Naive thymus-derived CD8-positive, alpha-beta T cell (primary cell): ENCODE measurements at regions of chr4 and their contacts with region 1.

Region 1: GRCh38 chr4:58809342-58809741 is 1699.2 kb upstream of the IGFBP7 start:
- DNase-seq: no peak
- ATAC-seq: no peak
- H3K4me3 Mint-ChIP-seq: no peak overlapping the region
- H3K27ac Mint-ChIP-seq: no peak overlapping the region
- H3K4me1 Mint-ChIP-seq: no peaks in the 10 kb centered on the region
- H3K27me3 Mint-ChIP-seq: no peaks in the 10 kb centered on the region

Region 2: DNA sequence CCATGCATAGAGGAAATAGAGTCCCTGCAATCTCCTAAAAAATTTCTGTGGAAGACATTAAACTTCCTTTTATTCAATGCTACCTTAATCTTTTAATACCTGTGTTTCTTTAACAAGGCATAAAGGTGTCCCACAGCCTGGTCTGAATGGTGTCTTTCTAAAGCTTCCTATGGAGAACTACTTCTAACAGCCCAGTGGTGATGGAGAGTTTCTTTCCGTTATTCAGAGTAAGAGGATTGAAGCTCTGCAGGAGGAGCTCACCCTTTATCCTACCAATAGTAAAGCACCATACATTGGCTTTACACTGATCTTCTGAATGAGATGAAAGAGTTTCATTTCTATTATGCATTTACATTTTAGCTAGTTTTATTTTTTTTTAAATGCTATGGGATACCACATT is 1028.4 kb after region 1 on chr4:
- POLR2A ChIA-PET with region 1: no interaction called
- DNase-seq: no peak
- ATAC-seq: no peak
- H3K4me3 Mint-ChIP-seq: no peak overlapping the region
- H3K27ac Mint-ChIP-seq: no peak overlapping the region
- H3K4me1 Mint-ChIP-seq: no peaks in the 10 kb centered on the region
- H3K27me3 Mint-ChIP-seq: no peaks in the 10 kb centered on the region

Region 3: GRCh38 chr4:59881632-59882031 is 1072.3 kb after region 1 on chr4:
- POLR2A ChIA-PET with region 1: interaction called, 11 read pairs
- DNase-seq: no peak
- ATAC-seq: no peak
- H3K4me3 Mint-ChIP-seq: no peak overlapping the region
- H3K27ac Mint-ChIP-seq: no peak overlapping the region
- H3K4me1 Mint-ChIP-seq: no peaks in the 10 kb centered on the region
- H3K27me3 Mint-ChIP-seq: no peaks in the 10 kb centered on the region